Ovary (tissue), 10 donors: ENCODE measurements at regions of chr15 and their contacts with region 1.

Region 1: DNA sequence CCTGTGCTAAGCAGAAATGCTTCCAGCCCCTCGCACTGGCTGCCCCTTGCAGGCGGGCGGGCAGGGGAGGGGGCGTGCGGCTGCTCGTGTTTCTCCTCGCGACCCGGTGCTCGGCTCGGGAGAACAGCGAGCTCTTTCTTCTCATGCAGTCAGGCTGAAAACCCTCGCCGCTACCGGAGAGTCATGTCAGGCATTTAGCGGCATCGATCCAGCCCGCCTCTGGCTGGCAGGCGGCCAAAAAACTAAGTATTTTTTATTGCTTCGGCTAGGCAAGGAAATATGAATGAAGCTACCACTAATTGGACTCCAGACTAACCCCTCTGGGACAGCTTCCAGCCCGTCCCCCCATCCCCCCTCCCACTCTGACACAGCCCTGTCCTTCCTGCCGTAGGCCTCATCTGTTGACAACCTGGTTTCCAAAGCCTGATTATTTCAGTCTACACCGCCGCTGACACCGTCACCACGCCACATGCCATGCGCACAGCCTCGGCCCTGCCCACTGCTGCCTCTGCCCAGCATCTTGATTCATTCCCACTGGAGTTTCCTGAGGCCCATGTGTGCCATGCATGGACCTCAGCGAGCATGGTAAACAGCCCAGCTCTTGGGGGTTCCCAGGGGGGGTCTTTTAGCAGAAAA is 35.3 kb downstream of the TLE3 start:
- DNase-seq: peak; percentile 80 to 90 (median 88)
- H3K4me3 ChIP-seq: no peak overlapping the region
- H3K27ac ChIP-seq: no peak overlapping the region
- H3K4me1 ChIP-seq: peaks cover 8% of the 10 kb centered on the region
- H3K27me3 ChIP-seq: no peaks in the 10 kb centered on the region
- CTCF ChIP-seq: no peak
- EP300 ChIP-seq: no peak
- POLR2A ChIP-seq: no peak

Region 2: GRCh38 chr15:69823218-69823907 is 239.1 kb before region 1 on chr15:
- intact Hi-C with region 1: no loop called
- DNase-seq: no peak
- H3K4me3 ChIP-seq: no peak overlapping the region
- H3K27ac ChIP-seq: no peak overlapping the region
- H3K4me1 ChIP-seq: no peaks in the 10 kb centered on the region
- H3K27me3 ChIP-seq: no peaks in the 10 kb centered on the region
- CTCF ChIP-seq: no peak
- EP300 ChIP-seq: no peak
- POLR2A ChIP-seq: no peak

Region 3: GRCh38 chr15:70264014-70264582 is 201.7 kb after region 1 on chr15:
- intact Hi-C with region 1: loop called in 1 of 4 experiments (anchors 10 kb)
- DNase-seq: peak in 2 of 5 donors; percentile 44 to 48
- H3K4me3 ChIP-seq: no peak overlapping the region
- H3K27ac ChIP-seq: no peak overlapping the region
- H3K4me1 ChIP-seq: peaks cover 17% of the 10 kb centered on the region
- H3K27me3 ChIP-seq: no peaks in the 10 kb centered on the region
- CTCF ChIP-seq: no peak
- EP300 ChIP-seq: no peak
- POLR2A ChIP-seq: no peak